ENCODE measurements at regions of chr20 and their contacts with region 1.

Region 1: GRCh38 chr20:50460460-50461267 is 49.5 kb upstream of the PTPN1 start:
- DNase-seq: peak; percentile 80 to 94 (median 90)
- H3K4me3 ChIP-seq: no peak overlapping the region
- H3K27ac ChIP-seq: no peak overlapping the region
- H3K4me1 ChIP-seq: peaks cover 5% of the 10 kb centered on the region
- H3K27me3 ChIP-seq: no peaks in the 10 kb centered on the region
- CTCF ChIP-seq: peak; percentile 58 to 98 (median 95)
- EP300 ChIP-seq: no peak
- POLR2A ChIP-seq: peak; percentile 39

Region 2: GRCh38 chr20:50286609-50287008 is 174.1 kb before region 1 on chr20:
- intact Hi-C with region 1: loop called in 2 of 4 experiments (anchors 5 to 10 kb)
- DNase-seq: peak; percentile 83 to 92 (median 84)
- H3K4me3 ChIP-seq: no peak overlapping the region
- H3K27ac ChIP-seq: peak overlapping the region; percentile 92 to 95
- H3K4me1 ChIP-seq: peaks cover 34% of the 10 kb centered on the region
- H3K27me3 ChIP-seq: no peaks in the 10 kb centered on the region
- CTCF ChIP-seq: no peak
- EP300 ChIP-seq: no peak
- POLR2A ChIP-seq: peak; percentile 49

Region 3: GRCh38 chr20:50292324-50293243 is 168.1 kb before region 1 on chr20:
- intact Hi-C with region 1: loop called in 2 of 4 experiments (anchors 5 to 10 kb)
- DNase-seq: peak; percentile 98 to 99 (median 99)
- H3K4me3 ChIP-seq: no peak overlapping the region
- H3K27ac ChIP-seq: peak overlapping the region; percentile 67 to 88
- H3K4me1 ChIP-seq: peaks cover 13% of the 10 kb centered on the region
- H3K27me3 ChIP-seq: no peaks in the 10 kb centered on the region
- CTCF ChIP-seq: no peak
- EP300 ChIP-seq: peak; percentile 100
- POLR2A ChIP-seq: peak; percentile 42

Region 4: DNA sequence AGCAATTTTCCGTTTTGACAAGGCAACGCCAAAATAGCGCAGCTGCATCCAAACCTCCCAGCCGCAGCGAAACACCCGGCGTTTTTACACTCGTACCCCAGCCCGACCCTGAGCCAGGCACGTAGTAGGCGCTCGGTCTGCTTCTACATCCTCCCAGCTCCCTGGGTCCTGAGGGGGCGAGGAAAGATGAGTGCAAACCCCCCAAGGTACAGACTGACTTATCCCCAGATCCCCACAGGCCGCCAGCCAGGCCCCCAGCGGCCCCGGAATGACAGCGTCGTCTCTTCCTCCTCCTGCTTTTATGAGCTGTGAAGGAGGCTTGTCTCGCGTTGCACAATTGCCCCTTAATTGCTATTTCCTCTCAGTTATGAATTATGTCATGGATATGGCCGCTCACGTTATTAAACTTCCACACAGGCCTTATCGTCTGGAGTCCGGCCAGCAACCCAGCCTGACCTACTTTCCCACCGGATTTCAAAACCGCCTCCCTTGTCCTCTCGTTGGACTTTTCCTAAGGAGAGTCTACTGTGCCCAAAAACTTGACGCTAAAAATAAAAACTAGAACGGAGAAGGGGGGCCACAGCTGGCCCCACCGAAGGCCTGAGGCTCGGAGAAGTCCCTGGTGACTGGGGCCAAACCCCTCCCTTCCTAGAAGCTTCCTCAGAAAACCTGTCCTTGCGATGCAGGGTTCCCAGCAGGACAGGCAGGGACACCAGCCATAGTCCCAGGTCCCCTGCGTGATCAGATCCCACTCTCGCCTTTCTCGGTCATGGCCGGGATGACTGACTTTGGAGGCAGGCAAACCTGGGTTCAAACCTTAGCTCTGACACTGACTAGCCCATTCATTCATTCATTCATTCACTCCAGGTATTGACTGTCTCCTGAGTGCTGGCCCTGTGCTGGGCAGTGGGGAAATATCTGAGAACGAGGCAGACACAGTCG is 81.3 kb before region 1 on chr20:
- intact Hi-C with region 1: loop called in 1 of 4 experiments (anchors 5 kb)
- DNase-seq: peak; percentile 92 to 98 (median 95)
- H3K4me3 ChIP-seq: no peak overlapping the region
- H3K27ac ChIP-seq: peak overlapping the region; percentile 41 to 49
- H3K4me1 ChIP-seq: peaks cover 15% of the 10 kb centered on the region
- H3K27me3 ChIP-seq: no peaks in the 10 kb centered on the region
- CTCF ChIP-seq: peak in 1 of 3 donors; percentile 26
- EP300 ChIP-seq: no peak
- POLR2A ChIP-seq: peak; percentile 82

Region 5: GRCh38 chr20:50744143-50744792 is 283.6 kb after region 1 on chr20:
- intact Hi-C with region 1: loop called in 1 of 4 experiments (anchors 10 kb)
- DNase-seq: peak; percentile 65 to 79 (median 74)
- H3K4me3 ChIP-seq: no peak overlapping the region
- H3K27ac ChIP-seq: peak overlapping the region; percentile 51 to 81
- H3K4me1 ChIP-seq: peaks cover 7% of the 10 kb centered on the region
- H3K27me3 ChIP-seq: no peaks in the 10 kb centered on the region
- CTCF ChIP-seq: peak in 2 of 3 donors; percentile 28 to 36
- EP300 ChIP-seq: no peak
- POLR2A ChIP-seq: no peak